ENCODE measurements at regions of chr9 and their contacts with region 1.

Region 1: GRCh38 chr9:19102631-19103345 is at the start of gene HAUS6:
- DNase-seq: peak; percentile 96
- H3K4me3 ChIP-seq: peak within 1 kb of the TSS; percentile 84
- H3K27ac ChIP-seq: peak within 1 kb of the TSS; percentile 75
- H3K4me1 ChIP-seq: peaks cover 21% of the 10 kb centered on the region
- CTCF ChIP-seq: no peak
- total RNA-seq, gene HAUS6: 25.7 and 32.8 TPM in 2 replicates

Region 2: DNA sequence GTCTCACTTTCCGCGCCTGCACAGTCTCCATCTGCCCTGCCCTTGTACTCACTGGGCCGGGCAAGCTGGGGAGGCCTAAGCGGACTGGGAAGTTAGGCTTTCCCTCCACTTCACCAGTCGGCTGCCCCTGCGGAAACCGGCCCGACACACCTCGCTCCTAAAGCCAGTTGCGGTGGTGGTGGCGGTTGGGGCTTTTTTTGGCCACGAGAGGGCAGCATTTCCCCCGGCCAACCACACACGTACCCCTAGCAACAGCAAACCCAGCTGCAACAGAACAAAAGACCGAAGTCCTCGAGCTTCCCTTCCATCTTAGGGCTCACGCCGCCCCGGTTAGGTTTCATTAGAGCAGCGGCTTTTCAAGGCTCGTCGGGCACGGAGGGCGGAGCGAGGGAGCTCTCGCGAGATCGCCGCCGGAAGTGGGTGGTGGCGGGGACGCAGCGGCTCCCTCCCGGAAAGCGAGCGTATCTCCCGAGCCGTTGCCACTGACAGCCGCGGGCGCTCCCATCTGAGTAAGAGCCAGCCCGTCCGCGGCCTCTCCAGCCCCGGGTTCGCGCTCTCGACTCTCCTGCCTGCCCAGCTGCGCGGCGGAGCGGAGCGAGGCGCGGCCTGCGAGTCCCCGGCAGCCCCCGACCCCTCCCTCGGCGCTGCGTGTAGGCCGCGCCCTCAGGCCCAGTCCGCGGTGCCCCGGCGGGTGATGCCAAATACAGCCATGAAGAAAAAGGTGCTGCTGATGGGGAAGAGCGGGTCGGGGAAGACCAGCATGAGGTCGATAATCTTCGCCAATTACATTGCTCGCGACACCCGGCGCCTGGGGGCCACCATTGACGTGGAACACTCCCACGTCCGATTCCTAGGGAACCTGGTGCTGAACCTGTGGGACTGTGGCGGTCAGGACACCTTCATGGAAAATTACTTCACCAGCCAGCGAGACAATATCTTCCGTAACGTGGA is 53.5 kb before region 1 on chr9 and contains the start of gene RRAGA:
- CTCF ChIA-PET with region 1: no interaction called
- POLR2A ChIA-PET with region 1: interaction called, 8 read pairs
- intact Hi-C with region 1: loop called (anchors 1 kb)
- DNase-seq: peak; percentile 97
- H3K4me3 ChIP-seq: peak within 1 kb of the TSS; percentile 78
- H3K27ac ChIP-seq: peak within 1 kb of the TSS; percentile 87
- H3K4me1 ChIP-seq: peaks cover 28% of the 10 kb centered on the region
- CTCF ChIP-seq: peak; percentile 89
- total RNA-seq, gene RRAGA: 16.4 and 25.9 TPM in 2 replicates

Region 3: DNA sequence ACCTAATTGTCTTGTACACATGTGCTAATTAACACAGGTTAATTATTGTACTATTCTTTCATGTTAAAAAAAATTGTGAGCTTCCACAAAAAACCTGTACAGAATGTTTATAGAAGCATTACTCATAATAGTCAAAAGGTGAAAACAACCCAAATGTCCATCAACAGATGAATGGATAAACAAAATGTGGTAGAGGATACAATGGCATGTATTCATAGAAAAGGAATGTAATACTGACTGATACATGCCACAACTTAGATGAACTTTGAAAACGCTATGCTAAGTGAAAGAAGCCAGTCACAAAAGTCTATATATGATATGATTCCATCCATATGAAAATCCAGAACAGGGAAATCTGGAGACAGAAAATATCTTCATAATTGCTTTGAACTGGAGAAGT is 28.0 kb before region 1 on chr9:
- CTCF ChIA-PET with region 1: no interaction called
- POLR2A ChIA-PET with region 1: no interaction called
- intact Hi-C with region 1: no loop called
- DNase-seq: no peak
- H3K4me3 ChIP-seq: no peak overlapping the region
- H3K27ac ChIP-seq: no peak overlapping the region
- H3K4me1 ChIP-seq: no peaks in the 10 kb centered on the region
- CTCF ChIP-seq: no peak

Region 4: GRCh38 chr9:19174127-19174912 is 71.5 kb after region 1 on chr9:
- CTCF ChIA-PET with region 1: no interaction called
- POLR2A ChIA-PET with region 1: no interaction called
- intact Hi-C with region 1: loop called (anchors 10 kb)
- DNase-seq: peak; percentile 81
- H3K4me3 ChIP-seq: no peak overlapping the region
- H3K27ac ChIP-seq: no peak overlapping the region
- H3K4me1 ChIP-seq: peaks cover 20% of the 10 kb centered on the region
- CTCF ChIP-seq: peak; percentile 86

Region 5: DNA sequence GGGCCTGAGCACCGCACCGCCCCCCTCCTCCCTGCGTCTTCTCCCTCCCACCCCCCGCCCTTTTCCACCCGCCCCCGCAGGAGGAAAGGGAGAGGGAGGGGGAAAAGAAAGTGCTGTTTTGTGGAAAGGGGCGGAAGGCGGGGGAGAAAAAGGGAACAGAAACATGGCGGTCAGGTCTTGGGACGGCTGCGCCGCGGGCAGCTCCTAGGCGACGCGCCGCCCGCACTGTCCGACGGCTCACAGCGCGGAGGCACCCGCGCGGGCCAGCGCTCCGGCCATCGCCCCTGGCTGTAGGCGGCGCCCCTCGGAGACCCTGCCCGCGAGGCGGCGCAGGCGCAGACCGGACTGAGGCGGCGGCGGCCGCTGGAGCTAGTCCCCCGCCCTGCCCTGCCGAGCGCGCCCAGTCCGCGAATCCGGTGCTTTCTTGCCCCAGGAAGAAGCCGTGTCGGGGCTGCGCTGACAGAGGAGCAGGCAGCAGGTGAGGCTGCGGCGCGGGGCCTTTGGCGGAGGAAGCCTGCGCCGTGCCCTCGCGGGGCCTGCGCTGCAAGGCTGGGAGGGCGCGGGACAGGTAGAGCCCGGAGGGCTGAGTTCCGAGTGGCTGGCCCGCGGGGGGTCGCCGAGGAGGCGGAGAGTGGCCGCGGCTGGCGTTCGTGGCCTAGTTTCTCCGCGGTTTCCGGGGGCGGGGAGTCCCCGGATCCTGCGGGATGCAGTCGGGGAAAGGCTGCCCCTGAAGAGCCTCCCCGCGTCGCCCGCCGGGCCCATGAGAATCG is 127.8 kb after region 1 on chr9 and contains the start of gene DENND4C:
- CTCF ChIA-PET with region 1: no interaction called
- POLR2A ChIA-PET with region 1: interaction called, 7 read pairs
- intact Hi-C with region 1: loop called (anchors 2 kb)
- DNase-seq: peak; percentile 88
- H3K4me3 ChIP-seq: peak within 1 kb of the TSS; percentile 81
- H3K27ac ChIP-seq: peak within 1 kb of the TSS; percentile 45
- H3K4me1 ChIP-seq: peaks cover 29% of the 10 kb centered on the region
- CTCF ChIP-seq: peak; percentile 32; the same call in 1 of the 2 replicates
- total RNA-seq, gene DENND4C: 24.2 and 28.6 TPM in 2 replicates

Region 6: GRCh38 chr9:19255821-19256220 is 153.0 kb after region 1 on chr9:
- CTCF ChIA-PET with region 1: no interaction called
- POLR2A ChIA-PET with region 1: no interaction called
- intact Hi-C with region 1: no loop called
- DNase-seq: no peak
- H3K4me3 ChIP-seq: no peak overlapping the region
- H3K27ac ChIP-seq: no peak overlapping the region
- H3K4me1 ChIP-seq: no peaks in the 10 kb centered on the region
- CTCF ChIP-seq: no peak

Region 7: GRCh38 chr9:20997503-20998076 is 1894.8 kb after region 1 on chr9:
- CTCF ChIA-PET with region 1: no interaction called
- POLR2A ChIA-PET with region 1: interaction called, 11 read pairs
- intact Hi-C with region 1: no loop called
- DNase-seq: peak; percentile 48
- H3K4me3 ChIP-seq: no peak overlapping the region
- H3K27ac ChIP-seq: peak overlapping the region; percentile 35
- H3K4me1 ChIP-seq: peaks cover 36% of the 10 kb centered on the region
- CTCF ChIP-seq: no peak